ENCODE measurements at regions of chr17 and their contacts with region 1.

Region 1: GRCh38 chr17:75749545-75750389 is 15.2 kb downstream of the GALK1 start:
- DNase-seq: peak; percentile 77 to 95 (median 87)
- ATAC-seq: peak; percentile 64
- H3K4me3 ChIP-seq: no peak overlapping the region
- H3K4me3 Mint-ChIP-seq: no peak overlapping the region
- H3K27ac ChIP-seq: no peak overlapping the region
- H3K27ac Mint-ChIP-seq: no peak overlapping the region
- H3K4me1 ChIP-seq: peaks cover 23% of the 10 kb centered on the region
- H3K4me1 Mint-ChIP-seq: peaks cover 19% of the 10 kb centered on the region
- H3K27me3 ChIP-seq: no peaks in the 10 kb centered on the region
- H3K27me3 Mint-ChIP-seq: peaks cover 2% of the 10 kb centered on the region
- CTCF ChIP-seq: peak; percentile 90

Region 2: GRCh38 chr17:75319904-75320691 is 429.7 kb before region 1 on chr17:
- CTCF ChIA-PET with region 1: no interaction called
- POLR2A ChIA-PET with region 1: no interaction called
- intact Hi-C with region 1: loop called in 1 of 2 experiments (anchors 2 kb)
- DNase-seq: no peak
- ATAC-seq: no peak
- H3K4me3 ChIP-seq: no peak overlapping the region
- H3K4me3 Mint-ChIP-seq: no peak overlapping the region
- H3K27ac ChIP-seq: no peak overlapping the region
- H3K27ac Mint-ChIP-seq: no peak overlapping the region
- H3K4me1 ChIP-seq: peaks cover 5% of the 10 kb centered on the region
- H3K4me1 Mint-ChIP-seq: peaks cover 6% of the 10 kb centered on the region
- H3K27me3 ChIP-seq: no peaks in the 10 kb centered on the region
- H3K27me3 Mint-ChIP-seq: no peaks in the 10 kb centered on the region
- CTCF ChIP-seq: no peak

Region 3: GRCh38 chr17:75645889-75646637 is 103.7 kb before region 1 on chr17:
- CTCF ChIA-PET with region 1: interaction called, 103 read pairs
- POLR2A ChIA-PET with region 1: no interaction called
- intact Hi-C with region 1: no loop called
- DNase-seq: peak in 2 of 9 experiments; percentile 20 to 36
- ATAC-seq: peak; percentile 36
- H3K4me3 ChIP-seq: no peak overlapping the region
- H3K4me3 Mint-ChIP-seq: no peak overlapping the region
- H3K27ac ChIP-seq: no peak overlapping the region
- H3K27ac Mint-ChIP-seq: peak overlapping the region; percentile 69
- H3K4me1 ChIP-seq: peaks cover 3% of the 10 kb centered on the region
- H3K4me1 Mint-ChIP-seq: peaks cover 6% of the 10 kb centered on the region
- H3K27me3 ChIP-seq: no peaks in the 10 kb centered on the region
- H3K27me3 Mint-ChIP-seq: no peaks in the 10 kb centered on the region
- CTCF ChIP-seq: no peak

Region 4: DNA sequence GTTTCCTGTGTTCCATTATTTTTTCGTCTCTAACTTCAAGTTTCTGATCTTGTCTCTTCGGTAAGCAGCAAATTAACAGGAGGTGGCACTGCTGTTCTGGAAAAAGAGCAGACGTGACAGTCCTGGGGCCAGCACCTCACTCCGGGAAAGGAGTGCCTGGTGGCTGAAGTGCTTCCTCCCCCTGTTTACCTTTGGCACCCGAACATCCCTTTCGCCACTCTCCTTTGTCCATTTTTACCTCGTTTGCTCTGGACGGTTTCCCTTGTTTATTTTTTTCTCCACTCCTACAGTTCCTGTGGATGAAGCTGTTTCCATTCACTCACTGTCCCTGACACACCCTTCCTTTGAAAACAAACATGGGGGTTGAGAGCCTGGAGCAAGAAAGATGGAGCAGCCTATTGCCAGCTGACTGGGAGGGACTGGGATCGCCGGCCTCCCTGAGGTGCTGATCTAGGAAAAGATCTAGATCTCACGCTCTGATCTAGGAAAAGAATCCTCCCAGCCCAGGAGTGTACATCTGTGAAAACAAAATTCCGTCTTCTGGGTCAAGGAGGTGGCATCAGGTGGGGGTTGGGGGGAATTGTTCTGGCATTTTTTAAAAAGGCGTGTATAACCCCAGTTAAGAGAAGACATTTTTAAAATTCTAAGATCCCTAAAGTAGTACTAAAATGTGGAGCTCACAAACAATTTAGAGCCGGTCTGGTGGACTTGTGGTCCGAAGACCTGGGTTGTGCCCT is 69.9 kb before region 1 on chr17:
- CTCF ChIA-PET with region 1: interaction called, 145 read pairs
- POLR2A ChIA-PET with region 1: no interaction called
- intact Hi-C with region 1: loop called (anchors 1 kb)
- DNase-seq: no peak
- ATAC-seq: no peak
- H3K4me3 ChIP-seq: no peak overlapping the region
- H3K4me3 Mint-ChIP-seq: no peak overlapping the region
- H3K27ac ChIP-seq: no peak overlapping the region
- H3K27ac Mint-ChIP-seq: no peak overlapping the region
- H3K4me1 ChIP-seq: no peaks in the 10 kb centered on the region
- H3K4me1 Mint-ChIP-seq: peaks cover 12% of the 10 kb centered on the region
- H3K27me3 ChIP-seq: no peaks in the 10 kb centered on the region
- H3K27me3 Mint-ChIP-seq: no peaks in the 10 kb centered on the region
- CTCF ChIP-seq: no peak

Region 5: DNA sequence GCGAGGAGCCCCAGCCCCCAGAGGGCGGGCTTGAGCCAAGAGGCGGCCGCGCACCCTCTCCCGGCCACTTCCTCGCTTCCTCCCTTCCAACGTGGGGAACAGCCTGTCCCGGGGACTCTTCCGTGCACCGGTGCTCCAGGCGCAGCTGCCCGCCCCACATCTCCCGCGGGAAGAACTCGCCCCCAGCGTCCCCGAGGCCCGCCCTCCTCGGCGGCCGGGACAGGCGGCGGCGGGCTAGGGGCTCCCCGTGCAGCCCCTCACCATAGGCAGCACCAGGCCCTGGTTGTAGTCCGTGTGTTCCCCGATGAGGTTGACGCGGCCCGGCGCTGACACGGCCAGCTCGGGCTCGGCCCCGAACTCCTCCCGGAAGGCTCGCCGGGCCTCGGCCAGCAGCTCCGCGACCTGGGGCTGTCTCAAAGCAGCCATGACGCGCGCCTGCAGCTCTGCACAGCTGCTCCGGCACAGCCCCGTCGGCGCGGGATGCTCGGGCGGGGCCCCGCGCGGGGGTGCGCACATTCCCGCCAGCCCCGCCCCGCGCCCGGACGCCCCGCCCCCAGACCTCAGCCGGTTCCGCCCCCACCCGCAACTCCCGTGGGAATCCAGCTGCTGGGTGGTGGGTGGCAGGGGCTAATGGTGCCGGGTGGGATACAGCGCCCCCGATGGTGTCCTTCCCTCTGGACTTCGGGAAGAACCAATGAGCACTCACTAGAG is 15.1 kb after region 1 on chr17 and contains the start of gene GALK1:
- CTCF ChIA-PET with region 1: interaction called, 159 read pairs
- POLR2A ChIA-PET with region 1: interaction called, 14 read pairs
- intact Hi-C with region 1: no loop called
- DNase-seq: peak; percentile 46 to 89 (median 70)
- ATAC-seq: peak; percentile 94
- H3K4me3 ChIP-seq: peak within 1 kb of the TSS; percentile 62 to 86
- H3K4me3 Mint-ChIP-seq: peak within 1 kb of the TSS; percentile 74
- H3K27ac ChIP-seq: peak within 1 kb of the TSS; percentile 51 to 63
- H3K27ac Mint-ChIP-seq: peak within 1 kb of the TSS; percentile 55
- H3K4me1 ChIP-seq: peaks cover 16% of the 10 kb centered on the region
- H3K4me1 Mint-ChIP-seq: peaks cover 8% of the 10 kb centered on the region
- H3K27me3 ChIP-seq: no peaks in the 10 kb centered on the region
- H3K27me3 Mint-ChIP-seq: no peaks in the 10 kb centered on the region
- CTCF ChIP-seq: peak; percentile 40
- total RNA-seq, gene GALK1: 3.4 to 3.7 TPM

Region 6: GRCh38 chr17:75827252-75828115 is 77.7 kb after region 1 on chr17:
- CTCF ChIA-PET with region 1: interaction called, 15 read pairs
- POLR2A ChIA-PET with region 1: interaction called, 6 read pairs
- intact Hi-C with region 1: loop called in 1 of 2 experiments (anchors 1 kb)
- DNase-seq: peak in 8 of 9 experiments; percentile 46 to 85 (median 72)
- ATAC-seq: peak; percentile 66
- H3K4me3 ChIP-seq: peak overlapping the region; percentile 33 to 39
- H3K4me3 Mint-ChIP-seq: peak overlapping the region; percentile 55
- H3K27ac ChIP-seq: peak overlapping the region; percentile 50 to 78
- H3K27ac Mint-ChIP-seq: peak overlapping the region; percentile 88
- H3K4me1 ChIP-seq: peaks cover 31% of the 10 kb centered on the region
- H3K4me1 Mint-ChIP-seq: peaks cover 21% of the 10 kb centered on the region
- H3K27me3 ChIP-seq: no peaks in the 10 kb centered on the region
- H3K27me3 Mint-ChIP-seq: no peaks in the 10 kb centered on the region
- CTCF ChIP-seq: peak; percentile 65